Activated naive CD4-positive, alpha-beta T cell treated with anti-CD3 and anti-CD28 coated beads for 36 hours (primary cell): ENCODE measurements at regions of chr1 and their contacts with region 1.

Region 1: GRCh38 chr1:206803221-206803730 is 31.0 kb upstream of the IL10 start:
- DNase-seq: peak; percentile 92
- H3K4me3 Mint-ChIP-seq: no peak overlapping the region
- H3K27ac Mint-ChIP-seq: peak overlapping the region; percentile 82
- H3K4me1 Mint-ChIP-seq: peaks cover 59% of the 10 kb centered on the region
- H3K27me3 Mint-ChIP-seq: peaks cover 7% of the 10 kb centered on the region

Region 2: GRCh38 chr1:206469933-206470691 is 333.2 kb before region 1 on chr1 and contains the start of gene IKBKE:
- CTCF ChIA-PET with region 1: no interaction called
- intact Hi-C with region 1: loop called (anchors 5 kb)
- DNase-seq: peak; percentile 66
- H3K4me3 Mint-ChIP-seq: peak within 1 kb of the TSS; percentile 80
- H3K27ac Mint-ChIP-seq: peak within 1 kb of the TSS; percentile 89
- H3K4me1 Mint-ChIP-seq: peaks cover 89% of the 10 kb centered on the region
- H3K27me3 Mint-ChIP-seq: no peaks in the 10 kb centered on the region
- total RNA-seq, gene IKBKE: 7.0 to 8.6 TPM

Region 3: DNA sequence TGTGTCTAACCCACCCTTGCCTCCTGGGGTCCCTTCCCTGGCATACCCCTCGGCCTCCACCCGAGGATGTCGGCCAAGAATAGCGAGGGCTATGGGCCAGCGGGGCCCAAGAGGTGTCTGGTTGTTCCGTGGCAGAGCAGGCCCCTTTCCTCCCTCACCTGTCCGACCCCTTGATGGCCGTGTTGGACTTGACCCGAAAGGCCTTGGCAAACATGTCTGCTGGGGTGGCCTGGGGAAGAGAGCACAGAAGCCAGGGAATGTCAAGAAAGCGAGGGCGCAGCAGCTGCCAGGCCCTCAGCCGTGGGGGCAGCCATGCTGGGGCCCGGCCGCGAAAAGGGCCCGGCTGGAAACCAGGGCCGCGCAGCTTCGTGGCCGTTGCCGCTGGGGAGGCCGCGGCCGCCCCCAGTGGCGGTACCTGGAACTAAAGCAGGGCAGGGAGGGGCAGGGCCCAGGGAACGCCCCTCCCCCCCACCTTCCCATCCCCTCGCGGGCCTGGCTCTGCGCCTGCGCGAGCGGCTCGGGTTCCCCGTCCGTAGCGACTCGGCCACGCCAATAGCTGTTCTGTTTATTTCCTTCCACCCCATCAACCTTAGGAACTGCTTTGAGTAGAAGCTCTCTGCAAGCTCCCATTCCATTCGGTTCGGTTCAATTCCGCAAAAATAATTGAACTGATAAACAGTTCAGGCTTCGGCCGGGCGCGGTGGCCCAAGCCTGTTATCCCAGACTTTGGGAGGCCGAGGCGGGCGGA is 191.0 kb before region 1 on chr1 and contains the start of gene EIF2D:
- CTCF ChIA-PET with region 1: no interaction called
- intact Hi-C with region 1: loop called (anchors 1 kb)
- DNase-seq: peak; percentile 95
- H3K4me3 Mint-ChIP-seq: peak within 1 kb of the TSS; percentile 92
- H3K27ac Mint-ChIP-seq: peak within 1 kb of the TSS; percentile 99
- H3K4me1 Mint-ChIP-seq: peaks cover 44% of the 10 kb centered on the region
- H3K27me3 Mint-ChIP-seq: no peaks in the 10 kb centered on the region
- total RNA-seq, gene EIF2D: 116 to 122 TPM

Region 4: GRCh38 chr1:206725109-206725963 is 77.9 kb before region 1 on chr1:
- CTCF ChIA-PET with region 1: interaction called, 116 read pairs
- intact Hi-C with region 1: loop called (anchors 1 kb)
- DNase-seq: peak; percentile 84
- H3K4me3 Mint-ChIP-seq: no peak overlapping the region
- H3K27ac Mint-ChIP-seq: no peak overlapping the region
- H3K4me1 Mint-ChIP-seq: peaks cover 39% of the 10 kb centered on the region
- H3K27me3 Mint-ChIP-seq: no peaks in the 10 kb centered on the region

Region 5: GRCh38 chr1:206784471-206784903 is 18.8 kb before region 1 on chr1:
- CTCF ChIA-PET with region 1: interaction called, 9 read pairs
- intact Hi-C with region 1: loop called (anchors 1 kb)
- DNase-seq: peak; percentile 98
- H3K4me3 Mint-ChIP-seq: no peak overlapping the region
- H3K27ac Mint-ChIP-seq: peak overlapping the region; percentile 62
- H3K4me1 Mint-ChIP-seq: peaks cover 50% of the 10 kb centered on the region
- H3K27me3 Mint-ChIP-seq: peaks cover 7% of the 10 kb centered on the region

Region 6: GRCh38 chr1:206826405-206826804 is 23.1 kb after region 1 on chr1:
- CTCF ChIA-PET with region 1: no interaction called
- intact Hi-C with region 1: no loop called
- DNase-seq: no peak
- H3K4me3 Mint-ChIP-seq: no peak overlapping the region
- H3K27ac Mint-ChIP-seq: no peak overlapping the region
- H3K4me1 Mint-ChIP-seq: peaks cover 26% of the 10 kb centered on the region
- H3K27me3 Mint-ChIP-seq: no peaks in the 10 kb centered on the region

Region 7: DNA sequence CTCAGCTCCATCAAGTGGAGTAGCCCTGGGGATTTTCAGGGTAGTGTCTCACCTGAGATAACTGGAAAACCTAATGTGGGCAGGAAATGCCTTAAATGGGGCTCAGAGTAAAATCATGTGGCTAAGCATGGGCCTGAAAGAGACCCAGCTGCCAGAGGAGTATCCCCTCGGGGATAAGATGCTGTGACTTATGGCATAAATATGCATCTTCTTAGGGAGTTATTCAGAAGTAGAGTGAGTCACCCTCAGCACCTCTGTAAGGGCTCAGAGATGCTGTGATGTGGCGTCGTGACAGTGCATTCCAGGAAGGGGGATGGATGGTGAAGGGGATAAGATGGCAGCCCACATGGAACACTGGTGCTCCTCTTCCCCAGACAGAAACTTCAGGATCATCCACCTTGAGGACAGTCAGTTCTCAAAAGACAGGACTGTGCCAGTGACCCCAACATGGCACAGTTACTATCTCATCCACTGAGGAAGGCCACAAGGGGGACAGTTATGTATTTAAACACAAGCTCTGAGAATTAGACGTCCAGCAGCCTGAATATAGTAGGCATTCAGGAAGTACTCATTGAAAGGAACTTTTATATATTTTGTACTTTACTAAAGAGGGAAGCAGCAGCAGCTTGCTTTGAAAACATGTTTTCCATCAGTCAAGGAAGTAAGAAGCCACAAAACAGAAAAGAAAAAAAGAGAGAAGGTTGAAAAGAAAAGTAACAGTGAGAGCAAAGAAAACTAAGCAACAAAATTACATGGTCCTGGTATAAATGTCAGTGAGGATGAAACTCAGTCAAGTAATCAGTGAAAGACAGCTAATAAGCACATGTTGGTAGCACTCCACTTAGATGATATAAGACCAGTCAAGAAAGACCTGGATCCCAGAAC is 102.2 kb after region 1 on chr1:
- CTCF ChIA-PET with region 1: interaction called, 54 read pairs
- intact Hi-C with region 1: loop called (anchors 1 kb)
- DNase-seq: peak; percentile 88
- H3K4me3 Mint-ChIP-seq: peak overlapping the region; percentile 40
- H3K27ac Mint-ChIP-seq: peak overlapping the region; percentile 96
- H3K4me1 Mint-ChIP-seq: peaks cover 88% of the 10 kb centered on the region
- H3K27me3 Mint-ChIP-seq: no peaks in the 10 kb centered on the region

Region 8: DNA sequence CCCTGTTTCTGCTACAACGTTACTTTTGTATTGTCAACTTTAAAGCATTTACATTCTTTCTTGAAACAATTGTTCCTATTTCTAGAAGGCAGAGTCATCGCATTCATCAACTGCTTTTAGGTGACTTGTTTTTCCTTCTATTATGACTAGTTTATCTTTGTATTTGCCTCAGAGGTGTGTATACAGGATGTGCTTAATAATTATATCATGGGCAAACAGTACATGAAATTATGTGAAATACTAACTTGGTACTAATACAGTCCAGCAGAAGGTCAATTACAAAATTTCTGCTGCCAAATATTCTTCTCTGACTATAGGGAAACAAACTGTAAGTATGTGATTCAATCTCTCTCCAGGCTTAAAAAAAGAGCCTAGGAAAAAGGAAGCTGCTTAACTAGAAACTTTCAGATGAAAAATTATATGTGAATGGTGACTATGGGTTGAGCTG is 402.4 kb after region 1 on chr1:
- CTCF ChIA-PET with region 1: no interaction called
- intact Hi-C with region 1: no loop called
- DNase-seq: no peak
- H3K4me3 Mint-ChIP-seq: no peak overlapping the region
- H3K27ac Mint-ChIP-seq: no peak overlapping the region
- H3K4me1 Mint-ChIP-seq: peaks cover 5% of the 10 kb centered on the region
- H3K27me3 Mint-ChIP-seq: no peaks in the 10 kb centered on the region